ENCODE measurements at regions of chr14 and their contacts with region 1.

Region 1: GRCh38 chr14:38255673-38256532 is at the start of gene CLEC14A:
- DNase-seq: peak; percentile 82 to 90 (median 89)
- ATAC-seq: peak; percentile 84 to 93 (median 90)
- H3K4me3 ChIP-seq: peak within 1 kb of the TSS; percentile 53 to 82 (median 73)
- H3K27ac ChIP-seq: peak within 1 kb of the TSS; percentile 85 to 98 (median 95)
- H3K4me1 ChIP-seq: peaks cover 0 to 12% (median 5%) of the 10 kb centered on the region in 12 donors
- H3K27me3 ChIP-seq: peaks cover 0 to 33% (median 5%) of the 10 kb centered on the region in 9 donors
- CTCF ChIP-seq: no peak
- POLR2A ChIP-seq: peak in 1 of 2 donors; percentile 64
- total RNA-seq, gene CLEC14A: 23.6 to 59.9 (median 31.3) TPM

Region 2: GRCh38 chr14:38290601-38291190 is 34.8 kb after region 1 on chr14:
- intact Hi-C with region 1: loop called in 3 of 10 experiments (anchors 2 to 5 kb)
- DNase-seq: peak in 1 of 5 donors; percentile 9
- ATAC-seq: peak; percentile 75 to 95 (median 84)
- H3K4me3 ChIP-seq: no peak overlapping the region
- H3K27ac ChIP-seq: peak overlapping the region; percentile 12 to 67 (median 44)
- H3K4me1 ChIP-seq: peaks cover 0 to 25% (median 5%) of the 10 kb centered on the region in 12 donors
- H3K27me3 ChIP-seq: no peaks in the 10 kb centered on the region
- CTCF ChIP-seq: no peak
- POLR2A ChIP-seq: no peak

Region 3: DNA sequence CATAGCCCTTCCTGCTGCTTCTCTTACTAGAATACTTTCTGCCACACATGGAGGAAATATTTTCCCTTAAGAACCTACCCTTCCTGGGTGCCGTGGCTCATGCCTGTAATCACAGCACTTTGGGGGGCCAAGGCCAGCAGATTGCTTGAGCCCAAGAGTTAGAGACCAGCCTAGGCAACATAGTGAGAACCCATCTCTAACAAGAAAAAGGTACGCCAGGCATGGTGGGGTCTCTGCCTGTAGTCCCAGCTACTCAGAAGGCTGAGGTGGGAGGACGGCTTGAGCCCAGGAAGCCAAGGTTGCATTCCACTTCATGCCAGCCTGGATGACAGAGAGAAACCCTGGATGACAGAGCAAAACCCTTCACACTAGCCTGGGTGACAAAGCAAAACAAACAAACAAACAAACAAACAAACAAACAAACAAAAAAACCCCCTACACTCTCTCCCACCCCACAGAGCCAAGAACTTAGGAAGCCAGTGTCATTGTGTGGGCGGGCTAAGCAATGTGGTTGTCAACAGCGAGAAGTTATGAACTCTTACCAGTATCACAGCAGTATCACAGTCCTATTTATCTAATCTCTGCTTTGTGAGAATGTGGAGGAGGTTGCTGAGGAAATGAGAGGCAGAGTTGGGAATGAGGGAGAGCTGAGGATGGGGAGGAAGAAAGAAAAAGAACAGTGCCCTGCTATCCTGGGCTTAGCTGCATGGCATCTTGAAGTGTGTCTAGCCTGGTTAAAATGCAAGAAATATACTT is 53.8 kb after region 1 on chr14:
- intact Hi-C with region 1: loop called in 2 of 10 experiments (anchors 1 to 5 kb)
- DNase-seq: no peak
- ATAC-seq: peak in 1 of 4 donors; percentile 36
- H3K4me3 ChIP-seq: peak overlapping the region in 1 of 12 donors; percentile 10
- H3K27ac ChIP-seq: peak overlapping the region; percentile 39 to 88 (median 71)
- H3K4me1 ChIP-seq: peaks cover 0 to 25% (median 0%) of the 10 kb centered on the region in 12 donors
- H3K27me3 ChIP-seq: no peaks in the 10 kb centered on the region
- CTCF ChIP-seq: no peak
- POLR2A ChIP-seq: no peak

Region 4: GRCh38 chr14:38366374-38366773 is 110.5 kb after region 1 on chr14:
- intact Hi-C with region 1: loop called in 4 of 10 experiments (anchors 2 to 10 kb)
- DNase-seq: no peak
- ATAC-seq: peak in 2 of 4 donors; percentile 50 to 60
- H3K4me3 ChIP-seq: no peak overlapping the region
- H3K27ac ChIP-seq: peak overlapping the region in 3 of 12 donors; percentile 12 to 70 (median 50)
- H3K4me1 ChIP-seq: peaks cover 0 to 24% (median 4%) of the 10 kb centered on the region in 12 donors
- H3K27me3 ChIP-seq: no peaks in the 10 kb centered on the region
- CTCF ChIP-seq: no peak
- POLR2A ChIP-seq: no peak

Measured in heart left ventricle (tissue), 16 donors.